ENCODE measurements at regions of chr19 and their contacts with region 1.

Region 1: DNA sequence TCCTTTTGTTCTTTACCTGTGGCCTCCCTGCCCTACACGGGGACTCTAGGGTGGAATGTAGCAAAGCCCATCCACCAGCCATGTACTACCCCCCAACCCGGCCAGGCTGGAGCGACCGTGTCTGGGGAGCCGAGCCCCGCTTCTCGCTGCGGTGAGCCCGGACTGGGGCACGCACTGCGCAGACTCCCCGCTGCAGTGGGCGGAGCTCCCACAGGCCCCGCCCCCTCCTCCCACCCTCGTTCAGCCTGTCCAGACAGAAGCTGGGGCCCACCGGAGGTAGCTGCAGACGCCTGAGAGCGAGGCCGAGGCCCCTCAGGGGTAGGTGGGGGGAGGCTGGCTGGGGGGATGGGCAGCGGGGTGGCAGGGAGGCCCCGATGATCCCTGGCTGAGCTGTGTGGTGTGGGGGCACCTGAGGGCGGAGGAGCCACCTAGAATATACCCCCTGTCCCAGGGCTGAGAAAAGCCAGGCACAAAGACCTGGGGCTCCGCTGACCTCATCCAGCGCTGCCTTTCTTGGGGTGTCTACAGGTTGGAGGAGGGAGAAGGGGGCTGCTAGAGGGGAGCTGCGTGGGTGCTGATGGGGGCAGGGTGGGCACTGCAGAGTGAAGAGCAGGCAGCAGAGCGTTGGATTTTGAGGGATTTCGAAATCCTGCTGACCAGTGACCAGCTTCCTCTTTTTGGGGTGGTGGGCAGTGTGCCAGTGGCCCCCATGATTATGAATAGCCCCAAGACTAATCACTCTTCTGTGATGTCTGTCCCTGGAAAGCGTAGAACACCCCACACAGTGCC is 17.3 kb downstream of the PLD3 start:
- H3K4me3 Mint-ChIP-seq: peak overlapping the region; percentile 73
- H3K27ac Mint-ChIP-seq: peak overlapping the region; percentile 81
- H3K4me1 Mint-ChIP-seq: peaks cover 77% of the 10 kb centered on the region
- H3K27me3 Mint-ChIP-seq: no peaks in the 10 kb centered on the region

Region 2: GRCh38 chr19:40305403-40305802 is 60.4 kb before region 1 on chr19:
- intact Hi-C with region 1: loop called (anchors 5 kb)
- H3K4me3 Mint-ChIP-seq: no peak overlapping the region
- H3K27ac Mint-ChIP-seq: no peak overlapping the region
- H3K4me1 Mint-ChIP-seq: peaks cover 16% of the 10 kb centered on the region
- H3K27me3 Mint-ChIP-seq: no peaks in the 10 kb centered on the region

Region 3: DNA sequence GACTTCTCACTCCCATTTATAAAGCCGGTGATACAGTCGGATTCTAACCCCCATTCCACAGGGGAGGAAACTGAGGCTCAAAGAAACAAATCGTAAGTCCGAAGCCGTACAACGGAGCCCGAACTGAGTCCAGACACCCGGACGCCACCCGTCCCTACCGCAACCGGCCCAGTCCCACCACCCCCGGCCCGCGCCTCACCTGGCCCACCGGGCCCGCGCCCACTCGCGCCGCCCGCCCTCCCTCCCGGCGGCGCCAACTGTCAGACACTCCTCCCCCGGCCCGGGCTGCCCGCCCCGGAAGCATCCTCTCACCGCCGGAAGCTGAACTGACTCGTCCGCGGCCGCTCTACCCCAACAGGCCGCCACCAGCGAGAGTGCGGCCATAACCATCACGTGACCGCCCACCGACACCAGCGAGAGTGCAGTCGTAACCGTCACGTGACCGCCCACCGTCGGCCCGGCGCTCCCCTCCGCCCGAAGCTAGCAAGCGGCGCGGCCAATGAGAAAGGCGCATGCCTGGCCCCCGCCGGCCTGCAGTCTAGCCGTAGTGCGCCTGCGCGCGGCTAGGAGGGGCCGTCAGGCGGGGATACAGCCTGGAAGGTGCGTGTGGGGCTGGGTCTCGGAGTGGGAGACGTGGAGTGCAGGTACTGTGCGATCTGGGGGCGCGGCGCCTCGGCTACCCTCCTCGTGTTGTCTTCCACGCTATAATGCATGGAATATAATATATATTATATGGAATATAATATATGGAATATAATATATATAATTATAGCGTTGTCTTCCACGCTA is 17.5 kb before region 1 on chr19 and contains the starts of genes C19orf47 and PLD3:
- intact Hi-C with region 1: loop called (anchors 1 kb)
- H3K4me3 Mint-ChIP-seq: peak within 1 kb of the TSS; percentile 89
- H3K27ac Mint-ChIP-seq: peak within 1 kb of the TSS; percentile 87
- H3K4me1 Mint-ChIP-seq: peaks cover 47% of the 10 kb centered on the region
- H3K27me3 Mint-ChIP-seq: no peaks in the 10 kb centered on the region

Region 4: DNA sequence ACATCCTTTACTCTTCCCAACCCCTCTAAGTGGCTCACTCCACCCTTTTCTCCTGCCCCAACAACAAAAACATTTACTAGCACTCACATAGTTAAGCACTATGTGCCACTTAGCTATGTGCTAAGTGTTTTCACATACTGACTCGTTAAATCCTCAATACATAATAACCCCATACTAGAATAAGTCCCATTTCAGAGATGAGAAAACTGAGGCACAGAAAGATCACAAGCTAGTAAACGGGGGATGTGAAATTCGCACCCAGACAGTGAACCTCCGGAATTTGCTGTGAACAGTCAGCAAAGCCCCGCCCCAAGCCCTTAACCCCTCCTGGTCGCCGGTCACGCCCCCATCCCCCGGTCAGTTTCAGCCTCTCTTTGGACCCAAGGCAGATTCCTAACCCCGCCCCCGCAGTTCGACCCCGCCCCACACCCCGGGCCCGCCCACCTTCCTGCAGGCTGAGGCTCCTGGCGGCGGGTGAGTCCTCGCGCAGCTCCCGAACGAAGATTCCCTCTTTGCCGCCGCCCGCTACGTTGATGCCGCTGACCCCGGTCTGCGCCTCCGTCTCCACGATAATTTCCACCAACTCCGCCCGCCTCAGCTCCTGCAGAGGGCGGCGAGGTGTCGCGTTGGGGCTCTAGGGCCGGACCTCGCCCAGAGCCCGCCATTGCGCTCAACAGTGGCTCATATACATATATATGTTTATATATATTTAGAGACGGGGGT is 37.6 kb after region 1 on chr19:
- intact Hi-C with region 1: loop called (anchors 2 kb)
- H3K4me3 Mint-ChIP-seq: peak overlapping the region; percentile 86
- H3K27ac Mint-ChIP-seq: peak overlapping the region; percentile 80
- H3K4me1 Mint-ChIP-seq: peaks cover 56% of the 10 kb centered on the region
- H3K27me3 Mint-ChIP-seq: peaks cover 6% of the 10 kb centered on the region

Region 5: DNA sequence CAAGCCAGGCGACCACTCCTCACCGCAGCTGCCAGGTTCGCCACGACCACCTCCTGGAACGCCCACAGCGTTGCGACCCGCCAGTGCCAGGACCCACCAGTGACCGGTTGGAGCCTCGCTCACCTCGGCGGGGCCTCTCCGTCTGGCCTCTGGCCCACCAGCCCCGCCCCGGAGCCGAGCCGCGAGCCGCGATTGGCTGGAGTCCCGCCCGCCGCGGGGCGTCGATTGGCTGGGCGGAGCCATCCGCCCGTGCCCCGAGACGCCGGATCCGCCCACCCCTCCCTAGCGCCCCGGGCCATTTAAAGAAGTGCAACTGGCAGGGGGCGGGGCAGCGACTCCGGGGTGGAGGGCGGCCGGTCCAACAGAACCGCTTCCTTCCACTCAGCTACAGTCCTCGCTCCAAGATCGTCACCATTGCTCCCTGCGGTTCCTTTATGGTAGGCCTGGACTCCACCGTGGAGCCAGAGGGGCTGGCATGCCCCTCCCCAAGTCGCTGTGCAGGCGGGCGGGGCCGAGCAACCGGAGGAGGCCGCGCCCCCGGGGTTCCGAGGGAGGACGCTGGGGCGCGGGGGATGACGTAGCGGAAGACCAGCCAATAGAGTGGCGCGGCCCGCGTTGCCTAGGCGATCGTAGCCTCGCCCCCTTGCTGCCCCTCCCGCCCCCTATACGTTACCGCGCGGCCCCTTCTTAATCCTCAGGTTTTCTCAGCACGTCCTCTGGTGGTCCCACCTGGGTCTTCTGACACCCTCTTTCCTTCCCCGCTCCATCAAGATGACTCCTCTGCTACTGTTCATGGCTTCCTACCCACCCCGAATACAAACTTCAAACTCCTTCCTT is 78.6 kb after region 1 on chr19 and contains the start of gene SERTAD3:
- intact Hi-C with region 1: loop called (anchors 10 kb)
- H3K4me3 Mint-ChIP-seq: peak within 1 kb of the TSS; percentile 97
- H3K27ac Mint-ChIP-seq: peak within 1 kb of the TSS; percentile 98
- H3K4me1 Mint-ChIP-seq: peaks cover 30% of the 10 kb centered on the region
- H3K27me3 Mint-ChIP-seq: no peaks in the 10 kb centered on the region